ENCODE measurements at regions of chr9 and their contacts with region 1.

Region 1: DNA sequence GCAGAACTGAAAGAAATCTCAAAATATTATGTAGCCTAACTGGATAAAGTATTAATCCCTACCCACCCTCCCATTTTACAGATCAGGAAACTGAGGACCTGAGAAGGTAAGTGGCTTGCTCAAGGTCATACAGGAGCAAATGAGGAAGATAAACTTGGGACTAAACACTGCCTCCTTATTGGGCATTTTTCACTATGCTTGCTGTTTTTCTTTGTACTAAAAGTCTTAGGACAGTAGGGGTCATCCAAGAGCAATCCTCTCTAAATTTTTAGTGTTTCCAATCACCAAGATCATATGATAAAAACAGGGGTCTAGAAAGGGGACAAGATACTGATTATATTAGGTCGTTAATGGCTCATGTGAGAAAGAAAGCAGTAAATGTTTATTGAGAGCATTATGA is 80.8 kb downstream of the RORB start:
- DNase-seq: no peak
- ATAC-seq: no peak
- H3K4me3 Mint-ChIP-seq: no peak overlapping the region
- H3K27ac Mint-ChIP-seq: no peak overlapping the region
- H3K4me1 Mint-ChIP-seq: no peaks in the 10 kb centered on the region
- H3K27me3 Mint-ChIP-seq: no peaks in the 10 kb centered on the region
- CTCF ChIP-seq: no peak

Region 2: GRCh38 chr9:74556685-74557084 is 21.3 kb before region 1 on chr9:
- CTCF ChIA-PET with region 1: no interaction called
- POLR2A ChIA-PET with region 1: no interaction called
- intact Hi-C with region 1: no loop called
- DNase-seq: no peak
- ATAC-seq: no peak
- H3K4me3 Mint-ChIP-seq: no peak overlapping the region
- H3K27ac Mint-ChIP-seq: no peak overlapping the region
- H3K4me1 Mint-ChIP-seq: peaks cover 16% of the 10 kb centered on the region
- H3K27me3 Mint-ChIP-seq: peaks cover 3% of the 10 kb centered on the region
- CTCF ChIP-seq: no peak

Region 3: GRCh38 chr9:74645007-74645639 is 67.2 kb after region 1 on chr9:
- CTCF ChIA-PET with region 1: interaction called, 8 read pairs
- POLR2A ChIA-PET with region 1: no interaction called
- intact Hi-C with region 1: loop called (anchors 1 kb)
- DNase-seq: no peak
- ATAC-seq: no peak
- H3K4me3 Mint-ChIP-seq: no peak overlapping the region
- H3K27ac Mint-ChIP-seq: no peak overlapping the region
- H3K4me1 Mint-ChIP-seq: no peaks in the 10 kb centered on the region
- H3K27me3 Mint-ChIP-seq: peaks cover 19% of the 10 kb centered on the region
- CTCF ChIP-seq: no peak

Region 4: GRCh38 chr9:74742792-74743730 is 165.1 kb after region 1 on chr9:
- CTCF ChIA-PET with region 1: interaction called, 3 read pairs
- POLR2A ChIA-PET with region 1: no interaction called
- intact Hi-C with region 1: loop called (anchors 1 kb)
- DNase-seq: no peak
- ATAC-seq: no peak
- H3K4me3 Mint-ChIP-seq: no peak overlapping the region
- H3K27ac Mint-ChIP-seq: no peak overlapping the region
- H3K4me1 Mint-ChIP-seq: peaks cover 2% of the 10 kb centered on the region
- H3K27me3 Mint-ChIP-seq: peaks cover 27% of the 10 kb centered on the region
- CTCF ChIP-seq: no peak

Measured in activated B cell treated with CpG ODN at 0.5 μM for 24 hours (primary cell).